Ascending aorta (tissue), 2 donors: ENCODE measurements at regions of chr22 and their contacts with region 1.

Region 1: GRCh38 chr22:44625981-44626687 is 75.9 kb upstream of the PRR5 start:
- DNase-seq: peak in 1 of 2 donors; percentile 81
- H3K4me3 ChIP-seq: no peak overlapping the region
- H3K27ac ChIP-seq: no peak overlapping the region
- H3K4me1 ChIP-seq: no peaks in the 10 kb centered on the region
- H3K27me3 ChIP-seq: no peaks in the 10 kb centered on the region
- CTCF ChIP-seq: peak; percentile 97 to 100 (median 97)

Region 2: GRCh38 chr22:43993027-43993760 is 632.9 kb before region 1 on chr22:
- intact Hi-C with region 1: loop called (anchors 1 kb)
- DNase-seq: peak in 1 of 2 donors; percentile 68
- H3K4me3 ChIP-seq: no peak overlapping the region
- H3K27ac ChIP-seq: no peak overlapping the region
- H3K4me1 ChIP-seq: no peaks in the 10 kb centered on the region
- H3K27me3 ChIP-seq: no peaks in the 10 kb centered on the region
- CTCF ChIP-seq: peak; percentile 85 to 94 (median 93)

Region 3: GRCh38 chr22:44080936-44081861 is 544.9 kb before region 1 on chr22:
- intact Hi-C with region 1: loop called (anchors 1 kb)
- DNase-seq: peak; percentile 22 to 78
- H3K4me3 ChIP-seq: peak overlapping the region in 1 of 2 donors; percentile 41
- H3K27ac ChIP-seq: no peak overlapping the region
- H3K4me1 ChIP-seq: peaks cover 0 to 4% of the 10 kb centered on the region in 2 donors
- H3K27me3 ChIP-seq: no peaks in the 10 kb centered on the region
- CTCF ChIP-seq: peak; percentile 62 to 89 (median 82)